PC-9 (cell line): ENCODE measurements at regions of chr19 and their contacts with region 1.

Region 1: GRCh38 chr19:38351865-38352395 is 16.3 kb downstream of the CATSPERG start:
- DNase-seq: no peak
- H3K4me3 ChIP-seq: no peak overlapping the region
- H3K27ac ChIP-seq: no peak overlapping the region
- H3K4me1 ChIP-seq: no peaks in the 10 kb centered on the region
- H3K27me3 ChIP-seq: no peaks in the 10 kb centered on the region
- CTCF ChIP-seq: no peak

Region 2: GRCh38 chr19:38298821-38299567 is 52.9 kb before region 1 on chr19:
- CTCF ChIA-PET with region 1: no interaction called
- POLR2A ChIA-PET with region 1: interaction called, 11 read pairs
- intact Hi-C with region 1: no loop called
- DNase-seq: peak; percentile 39 to 66
- H3K4me3 ChIP-seq: no peak overlapping the region
- H3K27ac ChIP-seq: peak overlapping the region; percentile 86
- H3K4me1 ChIP-seq: peaks cover 63% of the 10 kb centered on the region
- H3K27me3 ChIP-seq: no peaks in the 10 kb centered on the region
- CTCF ChIP-seq: no peak

Region 3: DNA sequence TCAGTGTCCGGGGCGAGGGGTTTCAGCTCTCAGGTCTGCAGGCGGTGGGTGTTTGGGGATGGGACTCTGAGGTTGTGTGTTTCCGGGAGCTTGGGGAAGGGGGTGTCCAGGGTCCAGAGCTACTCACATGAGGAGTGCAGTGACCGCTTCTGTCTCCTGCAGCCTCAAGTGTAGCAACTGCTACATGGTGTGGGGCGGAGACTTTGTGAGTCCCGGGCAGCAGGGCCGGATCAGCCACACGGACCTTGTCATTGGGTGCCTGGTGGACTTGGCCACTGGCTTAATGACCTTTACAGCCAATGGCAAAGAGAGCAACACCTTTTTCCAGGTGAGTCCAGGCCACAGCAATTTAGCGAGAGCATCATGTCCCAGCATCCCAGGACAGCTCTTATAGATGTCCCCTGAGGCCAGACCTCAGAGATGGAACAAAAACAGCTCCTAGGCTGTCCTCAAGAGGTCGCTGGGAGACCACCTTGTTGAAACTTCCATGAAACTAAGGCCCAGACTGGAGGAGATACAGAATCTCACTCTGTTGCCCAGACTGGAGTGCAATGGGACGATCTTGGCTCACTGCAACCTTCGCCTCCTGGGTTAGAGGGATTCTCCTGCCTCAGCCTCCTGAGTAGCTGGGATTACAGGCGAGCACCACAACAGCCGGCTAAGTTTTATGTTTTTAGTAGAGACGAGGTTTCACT is 126.5 kb after region 1 on chr19:
- CTCF ChIA-PET with region 1: no interaction called
- POLR2A ChIA-PET with region 1: no interaction called
- intact Hi-C with region 1: no loop called
- DNase-seq: peak in 1 of 2 experiments; percentile 35
- H3K4me3 ChIP-seq: no peak overlapping the region
- H3K27ac ChIP-seq: no peak overlapping the region
- H3K4me1 ChIP-seq: no peaks in the 10 kb centered on the region
- H3K27me3 ChIP-seq: peaks cover 73% of the 10 kb centered on the region
- CTCF ChIP-seq: peak; percentile 44